CD4-positive, alpha-beta memory T cell (primary cell): ENCODE measurements at regions of chr3 and their contacts with region 1.

Region 1: GRCh38 chr3:50235716-50236496 is at the start of gene GNAI2:
- DNase-seq: peak; percentile 99
- H3K4me3 ChIP-seq: peak within 1 kb of the TSS; percentile 75 to 94
- H3K4me3 Mint-ChIP-seq: peak within 1 kb of the TSS; percentile 96 to 99 (median 98)
- H3K27ac ChIP-seq: peak within 1 kb of the TSS; percentile 76
- H3K27ac Mint-ChIP-seq: peak within 1 kb of the TSS; percentile 91 to 97 (median 94)
- H3K4me1 ChIP-seq: peaks cover 40% of the 10 kb centered on the region
- H3K4me1 Mint-ChIP-seq: peaks cover 20 to 58% (median 35%) of the 10 kb centered on the region in 4 donors
- H3K27me3 ChIP-seq: no peaks in the 10 kb centered on the region
- H3K27me3 Mint-ChIP-seq: no peaks in the 10 kb centered on the region
- total RNA-seq, gene GNAI2: 292 to 300 TPM

Region 2: DNA sequence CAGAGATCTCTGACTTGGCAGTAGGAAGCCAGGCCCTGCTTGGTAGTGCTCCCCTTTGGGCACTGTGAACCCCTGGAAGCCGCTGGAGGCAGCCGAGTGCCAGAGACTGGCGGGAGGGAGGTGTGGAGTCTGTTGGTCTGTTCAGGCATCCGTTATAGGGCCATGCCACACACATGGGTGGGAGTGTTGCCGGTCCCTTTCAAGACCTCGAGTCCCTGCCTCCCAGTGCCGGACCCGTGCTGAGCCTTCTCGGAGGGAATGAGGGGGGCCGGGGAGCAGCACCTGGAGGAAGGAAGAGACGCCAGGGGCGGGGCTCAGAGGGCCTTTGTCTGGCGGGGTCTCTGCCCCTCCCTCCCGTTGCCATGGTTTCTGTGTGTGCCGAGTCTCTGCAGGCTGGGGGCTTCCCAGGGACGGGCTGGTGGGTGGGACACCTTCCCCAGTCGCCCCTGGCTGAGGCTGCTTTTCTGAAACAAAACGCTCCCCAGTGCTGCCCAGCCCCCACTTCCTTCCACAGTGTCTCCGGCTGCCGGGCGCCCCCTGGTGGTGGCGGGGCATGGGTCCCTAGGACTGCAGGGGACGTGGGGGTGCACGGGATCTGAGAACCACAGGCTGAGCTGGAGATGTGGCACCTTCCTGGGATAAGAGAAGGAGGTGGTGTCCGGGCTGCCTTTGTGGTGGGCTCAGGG is 10.1 kb after region 1 on chr3:
- CTCF ChIA-PET with region 1: interaction called, 238 read pairs
- POLR2A ChIA-PET with region 1: interaction called, 150 read pairs
- intact Hi-C with region 1: loop called (anchors 1 kb)
- DNase-seq: peak; percentile 89 to 94 (median 92)
- H3K4me3 ChIP-seq: peak overlapping the region; percentile 24 to 44
- H3K4me3 Mint-ChIP-seq: peak overlapping the region; percentile 75 to 88 (median 80)
- H3K27ac ChIP-seq: peak overlapping the region; percentile 76
- H3K27ac Mint-ChIP-seq: peak overlapping the region; percentile 92 to 98 (median 95)
- H3K4me1 ChIP-seq: peaks cover 97% of the 10 kb centered on the region
- H3K4me1 Mint-ChIP-seq: peaks cover 44 to 89% (median 71%) of the 10 kb centered on the region in 4 donors
- H3K27me3 ChIP-seq: no peaks in the 10 kb centered on the region
- H3K27me3 Mint-ChIP-seq: no peaks in the 10 kb centered on the region

Region 3: GRCh38 chr3:51974963-51975851 is 1739.3 kb after region 1 on chr3 and contains the start of gene ABHD14A:
- CTCF ChIA-PET with region 1: no interaction called
- POLR2A ChIA-PET with region 1: no interaction called
- intact Hi-C with region 1: loop called (anchors 5 kb)
- DNase-seq: peak; percentile 75 to 80 (median 76)
- H3K4me3 ChIP-seq: peak within 1 kb of the TSS; percentile 81 to 95
- H3K4me3 Mint-ChIP-seq: peak within 1 kb of the TSS; percentile 90 to 99 (median 96)
- H3K27ac ChIP-seq: peak within 1 kb of the TSS; percentile 78
- H3K27ac Mint-ChIP-seq: peak within 1 kb of the TSS; percentile 68 to 98 (median 96)
- H3K4me1 ChIP-seq: peaks cover 32% of the 10 kb centered on the region
- H3K4me1 Mint-ChIP-seq: peaks cover 28 to 53% (median 41%) of the 10 kb centered on the region in 4 donors
- H3K27me3 ChIP-seq: no peaks in the 10 kb centered on the region
- H3K27me3 Mint-ChIP-seq: no peaks in the 10 kb centered on the region
- total RNA-seq, gene ABHD14A: 23.7 to 24.5 TPM